Activated CD4-positive, alpha-beta memory T cell treated with anti-CD3 and anti-CD28 coated beads for 36 hours (primary cell): ENCODE measurements at regions of chr1 and their contacts with region 1.

Region 1: DNA sequence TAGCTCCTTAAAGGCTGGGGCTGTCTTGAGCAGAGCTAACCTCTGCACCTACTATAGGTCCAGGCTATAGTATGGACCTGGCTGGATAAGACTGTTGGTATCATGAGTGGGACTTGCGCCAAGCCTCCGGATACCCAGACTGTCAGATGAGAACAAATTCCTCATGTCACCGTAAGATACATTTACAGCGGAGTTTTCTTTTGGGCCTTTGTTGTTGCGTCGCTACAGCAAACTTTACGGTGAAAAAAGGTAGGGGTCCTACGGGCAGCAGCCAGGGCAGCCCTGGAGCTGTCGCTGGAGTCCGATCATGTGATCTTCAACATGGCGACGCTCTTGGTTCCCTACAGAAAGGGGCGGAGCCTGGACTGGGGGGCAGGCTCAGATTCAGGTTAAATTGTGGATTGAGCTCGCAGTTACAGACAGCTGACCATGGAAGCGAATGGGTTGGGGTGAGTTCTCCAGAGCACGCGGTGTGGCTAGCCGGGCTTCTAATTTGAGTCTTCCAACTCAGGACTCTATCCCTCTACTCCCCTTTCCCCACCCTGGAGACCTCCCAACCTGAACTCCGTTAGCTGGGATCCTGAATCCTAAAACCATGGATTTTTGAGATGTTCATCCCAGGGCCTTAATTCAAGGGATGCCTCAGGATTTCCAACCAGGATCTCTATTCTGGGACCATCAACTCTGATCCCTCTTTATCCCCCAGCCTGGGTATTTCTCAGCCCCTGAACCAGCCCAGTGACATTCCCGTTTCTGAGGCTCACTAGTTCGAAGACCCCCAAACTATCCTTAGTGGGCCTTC is at the start of gene UROD:
- DNase-seq: peak; percentile 96
- H3K4me3 Mint-ChIP-seq: peak within 1 kb of the TSS; percentile 82
- H3K27ac Mint-ChIP-seq: peak within 1 kb of the TSS; percentile 92
- H3K4me1 Mint-ChIP-seq: peaks cover 41% of the 10 kb centered on the region
- H3K27me3 Mint-ChIP-seq: no peaks in the 10 kb centered on the region
- total RNA-seq, gene UROD: 105 to 106 TPM

Region 2: GRCh38 chr1:44674113-44675000 is 337.7 kb before region 1 on chr1 and contains the starts of genes ARMH1 and TMEM53:
- CTCF ChIA-PET with region 1: no interaction called
- POLR2A ChIA-PET with region 1: no interaction called
- intact Hi-C with region 1: loop called (anchors 5 kb)
- DNase-seq: peak; percentile 99
- H3K4me3 Mint-ChIP-seq: peak within 1 kb of the TSS; percentile 83
- H3K27ac Mint-ChIP-seq: peak within 1 kb of the TSS; percentile 88
- H3K4me1 Mint-ChIP-seq: peaks cover 23% of the 10 kb centered on the region
- H3K27me3 Mint-ChIP-seq: no peaks in the 10 kb centered on the region
- total RNA-seq, gene ARMH1: 134 to 141 TPM
- total RNA-seq, gene TMEM53: 5.1 to 6.5 TPM

Region 3: DNA sequence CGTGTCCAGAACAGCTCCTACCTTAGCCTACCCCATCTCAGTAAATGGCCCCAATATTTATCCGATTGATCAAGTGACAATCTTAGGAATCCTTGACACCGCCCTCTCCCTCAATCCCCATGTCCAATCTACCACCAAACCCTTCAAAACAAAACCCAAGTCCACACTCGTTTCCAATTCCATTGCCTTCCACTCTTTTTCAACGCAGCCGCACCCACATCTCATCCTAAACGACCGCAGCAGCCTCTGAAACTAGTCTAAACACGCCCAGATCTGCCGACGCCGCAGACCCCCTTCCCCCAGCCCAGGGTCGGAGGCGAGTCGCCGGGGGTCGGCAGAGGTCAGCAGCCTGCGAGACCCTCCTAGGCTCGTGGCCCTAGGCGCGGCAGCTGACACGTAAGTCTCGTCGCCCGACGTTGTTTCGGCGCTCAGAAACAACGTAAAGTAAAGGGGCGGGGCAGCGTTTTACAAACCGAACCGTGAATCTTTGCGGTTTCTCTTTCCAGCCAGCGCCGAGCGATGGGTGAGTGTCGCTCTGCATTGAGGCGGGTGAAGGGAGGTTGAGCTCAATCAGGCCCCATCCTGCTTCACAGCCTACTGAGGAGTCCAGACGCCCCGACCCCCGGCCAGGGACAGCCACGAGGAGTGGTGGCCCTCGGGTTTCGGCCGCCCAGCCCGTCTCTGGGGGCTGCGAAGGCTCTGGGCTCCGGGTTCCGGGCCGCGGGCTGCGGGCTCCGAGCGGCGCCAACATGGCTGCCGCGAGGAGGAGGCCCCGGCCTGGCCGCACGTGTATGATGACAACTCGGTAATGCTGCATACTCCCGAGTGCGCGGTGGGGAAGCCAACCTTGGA is 236.7 kb before region 1 on chr1 and contains the start of gene RPS8:
- CTCF ChIA-PET with region 1: no interaction called
- POLR2A ChIA-PET with region 1: interaction called, 17 read pairs
- intact Hi-C with region 1: no loop called
- DNase-seq: peak; percentile 94
- H3K4me3 Mint-ChIP-seq: peak within 1 kb of the TSS; percentile 83
- H3K27ac Mint-ChIP-seq: peak within 1 kb of the TSS; percentile 81
- H3K4me1 Mint-ChIP-seq: peaks cover 38% of the 10 kb centered on the region
- H3K27me3 Mint-ChIP-seq: no peaks in the 10 kb centered on the region
- total RNA-seq, gene RPS8: 2,983 to 3,047 TPM

Region 4: DNA sequence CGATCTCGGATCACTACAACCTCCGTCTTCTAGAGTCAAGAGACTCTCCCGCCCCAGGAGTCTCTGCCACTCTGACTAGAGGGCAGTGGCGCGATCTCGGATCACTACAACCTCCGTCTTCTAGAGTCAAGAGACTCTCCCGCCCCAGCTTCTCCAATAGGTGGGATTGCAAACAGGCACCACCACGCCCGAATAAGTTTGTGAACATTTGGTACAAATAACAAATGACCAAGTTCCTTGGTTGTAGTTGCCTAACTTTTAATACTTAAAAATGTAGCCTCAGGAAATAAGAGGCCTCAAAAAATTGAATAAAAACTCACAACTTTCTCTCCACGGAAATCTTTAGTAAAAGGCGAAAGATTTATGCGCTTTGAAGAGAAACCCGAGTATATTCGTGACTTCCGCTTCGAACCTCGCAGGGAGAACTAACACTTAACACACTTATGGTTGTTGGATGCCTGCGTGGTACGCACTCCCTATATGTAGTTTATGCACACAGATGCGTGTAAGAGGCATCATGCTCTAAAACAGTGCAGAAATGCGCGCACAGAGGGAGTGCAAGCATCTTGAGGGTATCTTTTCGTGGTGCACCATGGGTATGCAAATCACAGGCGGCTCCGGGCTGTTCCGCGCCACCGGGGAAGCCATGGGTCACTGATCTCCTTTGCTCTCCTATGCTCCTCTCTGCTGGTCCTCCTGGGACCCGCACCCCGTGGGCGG is 192.3 kb before region 1 on chr1:
- CTCF ChIA-PET with region 1: interaction called, 3 read pairs
- POLR2A ChIA-PET with region 1: interaction called, 28 read pairs
- intact Hi-C with region 1: no loop called
- DNase-seq: peak; percentile 89
- H3K4me3 Mint-ChIP-seq: peak overlapping the region; percentile 89
- H3K27ac Mint-ChIP-seq: peak overlapping the region; percentile 99
- H3K4me1 Mint-ChIP-seq: peaks cover 42% of the 10 kb centered on the region
- H3K27me3 Mint-ChIP-seq: no peaks in the 10 kb centered on the region

Region 5: GRCh38 chr1:45191418-45191783 is 179.4 kb after region 1 on chr1:
- CTCF ChIA-PET with region 1: no interaction called
- POLR2A ChIA-PET with region 1: no interaction called
- intact Hi-C with region 1: no loop called
- DNase-seq: no peak
- H3K4me3 Mint-ChIP-seq: no peak overlapping the region
- H3K27ac Mint-ChIP-seq: no peak overlapping the region
- H3K4me1 Mint-ChIP-seq: peaks cover 13% of the 10 kb centered on the region
- H3K27me3 Mint-ChIP-seq: no peaks in the 10 kb centered on the region

Region 6: DNA sequence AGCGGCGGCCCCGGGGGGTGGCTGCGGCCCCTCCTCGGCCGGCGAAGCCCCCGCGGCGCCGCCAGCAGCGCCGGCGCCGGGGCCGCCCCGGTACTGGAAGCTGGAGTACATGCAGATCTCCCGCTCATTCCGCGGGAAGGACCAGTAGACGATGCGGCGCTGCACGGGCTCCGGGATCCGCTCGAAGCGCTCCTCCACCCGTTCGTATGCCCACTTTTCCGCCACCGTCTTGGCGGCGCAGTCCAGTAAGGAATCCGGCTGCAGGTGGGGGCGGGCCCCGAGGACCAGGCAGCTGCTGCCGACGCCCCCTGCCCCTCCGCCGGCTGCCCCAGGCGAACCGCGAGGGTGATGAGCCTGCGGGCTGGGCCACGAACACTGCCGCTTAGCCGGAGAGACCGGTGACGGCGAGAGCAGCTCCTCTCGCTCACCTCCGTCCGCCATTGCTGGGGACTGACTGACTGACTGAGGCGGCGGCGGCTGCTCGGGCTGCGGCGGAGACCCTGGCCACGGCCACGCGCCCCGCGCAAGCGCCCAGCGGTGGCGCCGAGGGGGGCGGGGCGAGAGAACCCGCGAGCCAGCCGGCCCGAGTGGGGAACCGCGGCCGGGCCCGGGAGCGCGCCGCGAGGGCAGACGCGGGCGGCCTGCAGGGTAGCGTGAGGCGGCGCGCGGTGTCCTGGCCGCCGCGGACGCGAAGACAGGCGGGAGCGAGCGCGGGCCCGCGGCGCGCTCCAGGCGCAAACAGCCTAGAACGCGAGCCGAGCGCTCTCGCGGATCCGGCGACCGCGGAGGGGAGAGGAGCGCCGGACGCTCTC is 194.1 kb after region 1 on chr1 and contains the start of gene ZSWIM5:
- CTCF ChIA-PET with region 1: interaction called, 5 read pairs
- POLR2A ChIA-PET with region 1: interaction called, 7 read pairs
- intact Hi-C with region 1: loop called (anchors 2 kb)
- DNase-seq: peak; percentile 71
- H3K4me3 Mint-ChIP-seq: peak within 1 kb of the TSS; percentile 83
- H3K27ac Mint-ChIP-seq: peak within 1 kb of the TSS; percentile 57
- H3K4me1 Mint-ChIP-seq: peaks cover 35% of the 10 kb centered on the region
- H3K27me3 Mint-ChIP-seq: no peaks in the 10 kb centered on the region
- total RNA-seq, gene ZSWIM5: 0.51 to 0.59 TPM

Region 7: GRCh38 chr1:45339789-45340570 is 327.9 kb after region 1 on chr1 and contains the starts of genes MUTYH and TOE1:
- CTCF ChIA-PET with region 1: interaction called, 26 read pairs
- POLR2A ChIA-PET with region 1: interaction called, 31 read pairs
- intact Hi-C with region 1: loop called (anchors 1 kb)
- DNase-seq: peak; percentile 97
- H3K4me3 Mint-ChIP-seq: peak within 1 kb of the TSS; percentile 93
- H3K27ac Mint-ChIP-seq: peak within 1 kb of the TSS; percentile 98
- H3K4me1 Mint-ChIP-seq: peaks cover 34% of the 10 kb centered on the region
- H3K27me3 Mint-ChIP-seq: no peaks in the 10 kb centered on the region
- total RNA-seq, gene MUTYH: 49.2 to 51.8 TPM
- total RNA-seq, gene TOE1: 22.8 to 23.1 TPM

Region 8: DNA sequence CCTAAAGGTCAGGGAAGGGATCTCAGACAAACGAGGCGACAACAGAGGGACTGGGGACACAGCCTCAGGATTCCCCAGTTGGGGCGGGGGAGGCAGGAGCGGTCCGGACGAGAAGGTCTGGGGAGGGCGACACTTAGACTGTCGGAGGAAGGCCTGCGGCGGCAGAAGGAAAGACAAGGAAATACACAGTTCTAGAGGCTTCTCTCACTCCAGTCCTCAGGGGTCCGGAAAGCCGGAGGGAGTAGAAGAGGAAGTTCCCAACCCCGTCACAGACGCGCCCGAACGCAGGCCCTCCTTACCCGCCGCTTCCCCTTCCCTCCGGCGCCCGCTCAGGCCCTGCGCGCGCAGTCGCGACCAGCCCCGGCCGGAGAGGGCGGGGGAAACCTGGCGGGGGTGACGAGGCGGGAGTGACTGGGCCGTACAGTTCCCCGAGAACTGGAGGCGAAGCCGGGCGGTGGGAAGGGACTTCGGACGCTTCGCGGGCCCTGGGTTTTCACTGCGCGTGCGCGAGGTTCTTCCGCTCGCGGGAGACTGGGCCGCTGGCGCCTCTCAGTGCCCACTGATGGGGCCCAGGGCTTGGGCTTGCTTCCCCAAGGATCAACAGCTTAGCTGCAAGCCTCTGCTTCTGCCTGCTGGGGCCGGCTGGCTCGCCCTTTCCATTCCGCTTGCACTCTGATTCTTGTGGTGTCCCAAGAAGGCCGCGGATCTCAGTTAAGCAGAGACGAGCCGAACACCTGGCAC is 738.4 kb after region 1 on chr1 and contains the start of gene IPP:
- CTCF ChIA-PET with region 1: no interaction called
- POLR2A ChIA-PET with region 1: no interaction called
- intact Hi-C with region 1: loop called (anchors 5 kb)
- DNase-seq: peak; percentile 97
- H3K4me3 Mint-ChIP-seq: peak within 1 kb of the TSS; percentile 91
- H3K27ac Mint-ChIP-seq: peak within 1 kb of the TSS; percentile 95
- H3K4me1 Mint-ChIP-seq: peaks cover 33% of the 10 kb centered on the region
- H3K27me3 Mint-ChIP-seq: no peaks in the 10 kb centered on the region
- total RNA-seq, gene IPP: 21.4 to 22.9 TPM